ENCODE measurements at regions of chr7 and their contacts with region 1.

Region 1: GRCh38 chr7:23597094-23598091 is at the start of gene CCDC126:
- DNase-seq: peak; percentile 64 to 83 (median 76)
- ATAC-seq: peak; percentile 98
- H3K4me3 ChIP-seq: peak within 1 kb of the TSS; percentile 93
- H3K4me3 Mint-ChIP-seq: peak within 1 kb of the TSS; percentile 86 to 98 (median 94)
- H3K27ac ChIP-seq: peak within 1 kb of the TSS; percentile 74
- H3K27ac Mint-ChIP-seq: peak within 1 kb of the TSS; percentile 59 to 86 (median 80)
- H3K4me1 ChIP-seq: peaks cover 9 to 13% of the 10 kb centered on the region in 2 donors
- H3K4me1 Mint-ChIP-seq: peaks cover 34 to 52% (median 39%) of the 10 kb centered on the region in 7 donors
- H3K27me3 ChIP-seq: no peaks in the 10 kb centered on the region
- H3K27me3 Mint-ChIP-seq: peaks cover 0 to 7% (median 4%) of the 10 kb centered on the region in 5 donors
- total RNA-seq, gene CCDC126: 7.0 to 24.7 (median 17.1) TPM

Region 2: DNA sequence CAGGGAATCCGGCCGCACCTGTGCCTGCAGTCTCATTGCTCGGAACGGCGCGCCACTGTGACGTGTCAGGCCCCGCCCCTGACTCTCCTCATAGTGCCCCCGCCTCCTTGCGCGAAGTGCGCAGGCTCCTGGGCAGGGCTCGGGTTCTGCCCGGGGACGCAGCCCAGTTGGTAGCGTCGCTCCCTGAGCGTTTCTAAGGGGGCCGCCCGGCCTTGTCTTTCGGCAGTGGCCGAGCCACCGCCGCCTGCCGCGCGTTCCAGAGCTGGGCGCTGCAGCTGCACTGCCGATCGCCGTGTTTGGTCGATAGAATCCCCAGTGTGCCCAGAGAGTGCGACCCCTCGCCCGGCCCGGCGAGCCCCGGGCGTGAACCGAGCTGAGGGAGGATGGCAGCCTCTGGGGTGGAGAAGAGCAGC is 491.7 kb before region 1 on chr7 and contains the start of gene KLHL7:
- CTCF ChIA-PET with region 1: no interaction called
- POLR2A ChIA-PET with region 1: no interaction called
- intact Hi-C with region 1: loop called (anchors 2 to 5 kb)
- DNase-seq: peak; percentile 90 to 95 (median 93)
- ATAC-seq: peak; percentile 99
- H3K4me3 ChIP-seq: peak within 1 kb of the TSS; percentile 93
- H3K4me3 Mint-ChIP-seq: peak within 1 kb of the TSS; percentile 90 to 99 (median 96)
- H3K27ac ChIP-seq: peak within 1 kb of the TSS; percentile 90
- H3K27ac Mint-ChIP-seq: peak within 1 kb of the TSS; percentile 91 to 97 (median 96)
- H3K4me1 ChIP-seq: peaks cover 4 to 18% of the 10 kb centered on the region in 2 donors
- H3K4me1 Mint-ChIP-seq: peaks cover 33 to 51% (median 47%) of the 10 kb centered on the region in 7 donors
- H3K27me3 ChIP-seq: no peaks in the 10 kb centered on the region
- H3K27me3 Mint-ChIP-seq: no peaks in the 10 kb centered on the region
- total RNA-seq, gene KLHL7: 16.9 to 22.9 (median 22.7) TPM

Region 3: GRCh38 chr7:23474094-23474828 is 123.1 kb before region 1 on chr7:
- CTCF ChIA-PET with region 1: no interaction called
- POLR2A ChIA-PET with region 1: no interaction called
- intact Hi-C with region 1: loop called in 1 of 2 experiments (anchors 5 kb)
- DNase-seq: peak in 6 of 9 donors; percentile 13 to 90 (median 26)
- ATAC-seq: peak; percentile 80
- H3K4me3 ChIP-seq: no peak overlapping the region
- H3K4me3 Mint-ChIP-seq: peak overlapping the region; percentile 13 to 85 (median 54)
- H3K27ac ChIP-seq: no peak overlapping the region
- H3K27ac Mint-ChIP-seq: peak overlapping the region in 5 of 9 donors; percentile 21 to 70 (median 69)
- H3K4me1 ChIP-seq: peaks cover 12 to 22% of the 10 kb centered on the region in 2 donors
- H3K4me1 Mint-ChIP-seq: peaks cover 17 to 35% (median 29%) of the 10 kb centered on the region in 7 donors
- H3K27me3 ChIP-seq: peaks cover 78 to 85% of the 10 kb centered on the region in 2 donors
- H3K27me3 Mint-ChIP-seq: peaks cover 67 to 75% (median 70%) of the 10 kb centered on the region in 5 donors

Region 4: GRCh38 chr7:23586159-23586558 is 11.2 kb before region 1 on chr7:
- CTCF ChIA-PET with region 1: no interaction called
- POLR2A ChIA-PET with region 1: interaction called, 4 read pairs
- intact Hi-C with region 1: loop called in 1 of 2 experiments (anchors 1 kb)
- DNase-seq: no peak
- ATAC-seq: no peak
- H3K4me3 ChIP-seq: no peak overlapping the region
- H3K4me3 Mint-ChIP-seq: no peak overlapping the region
- H3K27ac ChIP-seq: no peak overlapping the region
- H3K27ac Mint-ChIP-seq: no peak overlapping the region
- H3K4me1 ChIP-seq: no peaks in the 10 kb centered on the region
- H3K4me1 Mint-ChIP-seq: no peaks in the 10 kb centered on the region
- H3K27me3 ChIP-seq: no peaks in the 10 kb centered on the region
- H3K27me3 Mint-ChIP-seq: no peaks in the 10 kb centered on the region

Region 5: DNA sequence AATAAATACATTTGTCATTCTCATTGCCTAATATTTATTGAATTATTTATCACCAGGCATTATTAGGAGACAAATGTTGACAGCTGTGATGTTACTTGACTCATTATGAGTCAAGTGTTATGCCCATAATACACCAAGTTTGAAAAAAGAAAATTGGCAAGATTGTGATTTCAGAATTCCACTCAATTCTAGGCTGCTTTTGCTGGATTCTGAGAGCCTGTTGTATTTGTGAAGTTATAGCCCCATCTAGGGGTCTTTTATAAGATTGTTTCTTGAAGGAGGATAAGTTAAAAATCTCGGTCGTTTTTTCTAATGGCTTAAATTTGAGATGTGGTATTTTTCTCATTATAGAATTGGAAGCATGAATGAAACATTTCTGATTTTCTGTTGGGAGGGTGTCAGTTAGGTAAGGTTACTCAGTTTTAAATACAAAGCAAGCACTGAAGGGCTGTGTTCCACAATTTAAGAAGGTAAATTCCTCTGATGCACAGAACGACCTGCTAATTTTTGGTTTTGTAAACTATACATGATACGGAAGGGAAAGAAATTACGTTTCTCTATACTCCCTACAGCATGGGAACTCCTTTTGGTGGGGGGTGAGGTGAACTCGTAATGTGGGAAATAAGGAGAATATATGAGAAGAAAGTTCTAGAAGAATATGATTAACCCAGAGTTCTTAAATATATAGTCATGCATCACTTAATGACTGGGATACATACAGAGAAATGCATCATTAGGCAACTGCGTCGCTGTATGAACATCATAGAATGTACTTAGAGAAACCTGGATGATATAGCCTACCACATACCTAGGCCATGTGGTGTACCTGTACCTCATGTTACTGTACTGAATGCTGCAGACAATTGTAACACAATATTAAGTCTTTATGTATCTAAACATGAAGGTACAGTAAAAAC is 115.2 kb after region 1 on chr7:
- CTCF ChIA-PET with region 1: interaction called, 3 read pairs
- POLR2A ChIA-PET with region 1: no interaction called
- intact Hi-C with region 1: loop called in 1 of 2 experiments (anchors 1 kb)
- DNase-seq: peak in 7 of 9 donors; percentile 11 to 48 (median 37)
- ATAC-seq: peak; percentile 45
- H3K4me3 ChIP-seq: no peak overlapping the region
- H3K4me3 Mint-ChIP-seq: no peak overlapping the region
- H3K27ac ChIP-seq: no peak overlapping the region
- H3K27ac Mint-ChIP-seq: no peak overlapping the region
- H3K4me1 ChIP-seq: no peaks in the 10 kb centered on the region
- H3K4me1 Mint-ChIP-seq: peaks cover 0 to 2% (median 0%) of the 10 kb centered on the region in 7 donors
- H3K27me3 ChIP-seq: no peaks in the 10 kb centered on the region
- H3K27me3 Mint-ChIP-seq: peaks cover 0 to 4% (median 0%) of the 10 kb centered on the region in 5 donors

Region 6: DNA sequence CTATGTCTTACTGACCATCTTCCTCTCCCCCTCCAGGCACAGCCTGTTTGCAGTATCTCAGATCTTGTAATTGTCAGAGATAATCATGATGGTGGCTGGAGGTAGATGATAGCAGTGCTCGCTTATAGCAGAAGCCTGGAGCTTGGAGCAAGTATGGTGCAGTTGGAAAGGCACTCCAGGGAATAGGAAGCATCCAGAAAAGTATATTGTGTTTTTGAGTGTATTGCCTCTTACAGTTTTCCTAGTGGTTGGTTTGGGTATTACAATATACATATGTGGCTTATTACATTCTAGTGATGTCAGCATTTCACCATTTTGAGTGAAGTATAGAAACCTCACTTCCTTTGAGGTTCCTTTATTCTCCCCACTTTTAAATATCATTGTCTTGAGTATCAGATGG is 214.1 kb after region 1 on chr7:
- CTCF ChIA-PET with region 1: no interaction called
- POLR2A ChIA-PET with region 1: no interaction called
- intact Hi-C with region 1: no loop called
- DNase-seq: peak in 1 of 9 donors; percentile 4
- ATAC-seq: no peak
- H3K4me3 ChIP-seq: no peak overlapping the region
- H3K4me3 Mint-ChIP-seq: no peak overlapping the region
- H3K27ac ChIP-seq: no peak overlapping the region
- H3K27ac Mint-ChIP-seq: no peak overlapping the region
- H3K4me1 ChIP-seq: no peaks in the 10 kb centered on the region
- H3K4me1 Mint-ChIP-seq: peaks cover 0 to 4% (median 0%) of the 10 kb centered on the region in 7 donors
- H3K27me3 ChIP-seq: no peaks in the 10 kb centered on the region
- H3K27me3 Mint-ChIP-seq: peaks cover 0 to 25% (median 4%) of the 10 kb centered on the region in 5 donors

Region 7: DNA sequence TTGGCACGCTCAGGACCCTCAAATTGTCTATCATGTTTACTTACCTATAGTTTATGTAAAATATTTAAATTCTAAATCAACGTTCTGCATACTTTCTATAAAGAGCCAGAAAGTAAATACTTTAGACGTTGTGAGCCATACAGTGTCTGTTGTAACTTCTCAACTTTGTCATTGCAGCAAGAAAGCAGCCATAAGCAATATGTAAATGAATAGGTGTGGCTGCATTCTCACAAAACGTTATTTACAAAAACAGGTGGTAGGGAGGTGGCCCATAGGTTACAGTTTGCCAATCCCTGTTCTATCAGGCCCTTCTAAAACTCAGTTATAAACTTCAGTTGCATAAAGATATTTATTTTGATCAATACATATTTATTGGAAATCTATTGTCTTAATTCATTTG is 674.5 kb after region 1 on chr7:
- CTCF ChIA-PET with region 1: no interaction called
- POLR2A ChIA-PET with region 1: no interaction called
- intact Hi-C with region 1: no loop called
- DNase-seq: no peak
- ATAC-seq: no peak
- H3K4me3 ChIP-seq: no peak overlapping the region
- H3K4me3 Mint-ChIP-seq: no peak overlapping the region
- H3K27ac ChIP-seq: no peak overlapping the region
- H3K27ac Mint-ChIP-seq: no peak overlapping the region
- H3K4me1 ChIP-seq: no peaks in the 10 kb centered on the region
- H3K4me1 Mint-ChIP-seq: no peaks in the 10 kb centered on the region
- H3K27me3 ChIP-seq: peaks cover 0 to 3% of the 10 kb centered on the region in 2 donors
- H3K27me3 Mint-ChIP-seq: peaks cover 0 to 18% (median 11%) of the 10 kb centered on the region in 5 donors

Region 8: DNA sequence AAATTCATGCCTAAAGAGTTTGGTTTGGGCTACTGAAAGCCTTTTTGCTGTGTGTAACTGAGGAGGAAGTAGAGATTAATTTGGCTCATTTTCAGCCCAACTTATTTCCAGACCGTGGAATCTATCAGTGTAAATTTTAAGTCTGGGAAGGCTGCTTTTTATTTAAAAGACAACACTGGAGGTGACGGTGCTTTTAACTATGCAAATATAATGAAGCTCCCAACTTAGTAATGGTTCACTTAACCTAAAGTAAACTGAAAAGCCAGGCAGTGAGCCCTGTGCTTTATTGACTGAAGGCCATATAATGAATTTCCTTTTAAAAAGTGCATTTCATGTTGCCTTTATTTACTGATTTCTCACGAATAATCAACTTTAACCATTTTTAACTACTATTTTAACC is 813.8 kb after region 1 on chr7:
- CTCF ChIA-PET with region 1: no interaction called
- POLR2A ChIA-PET with region 1: no interaction called
- intact Hi-C with region 1: no loop called
- DNase-seq: no peak
- ATAC-seq: no peak
- H3K4me3 ChIP-seq: no peak overlapping the region
- H3K4me3 Mint-ChIP-seq: no peak overlapping the region
- H3K27ac ChIP-seq: no peak overlapping the region
- H3K27ac Mint-ChIP-seq: no peak overlapping the region
- H3K4me1 ChIP-seq: no peaks in the 10 kb centered on the region
- H3K4me1 Mint-ChIP-seq: peaks cover 0 to 3% (median 2%) of the 10 kb centered on the region in 7 donors
- H3K27me3 ChIP-seq: no peaks in the 10 kb centered on the region
- H3K27me3 Mint-ChIP-seq: peaks cover 5 to 22% (median 8%) of the 10 kb centered on the region in 5 donors

Region 9: GRCh38 chr7:25125137-25125946 is 1527.9 kb after region 1 on chr7 and contains the start of gene CYCS:
- CTCF ChIA-PET with region 1: no interaction called
- POLR2A ChIA-PET with region 1: no interaction called
- intact Hi-C with region 1: loop called (anchors 2 to 10 kb)
- DNase-seq: peak; percentile 97 to 100 (median 99)
- ATAC-seq: peak; percentile 96
- H3K4me3 ChIP-seq: peak within 1 kb of the TSS; percentile 74
- H3K4me3 Mint-ChIP-seq: peak within 1 kb of the TSS; percentile 88 to 100 (median 100)
- H3K27ac ChIP-seq: peak within 1 kb of the TSS; percentile 93
- H3K27ac Mint-ChIP-seq: peak within 1 kb of the TSS; percentile 98 to 100 (median 100)
- H3K4me1 ChIP-seq: peaks cover 7 to 13% of the 10 kb centered on the region in 2 donors
- H3K4me1 Mint-ChIP-seq: peaks cover 15 to 40% (median 23%) of the 10 kb centered on the region in 7 donors
- H3K27me3 ChIP-seq: no peaks in the 10 kb centered on the region
- H3K27me3 Mint-ChIP-seq: peaks cover 0 to 5% (median 0%) of the 10 kb centered on the region in 5 donors
- total RNA-seq, gene CYCS: 40.4 to 130 (median 114) TPM

Region 10: DNA sequence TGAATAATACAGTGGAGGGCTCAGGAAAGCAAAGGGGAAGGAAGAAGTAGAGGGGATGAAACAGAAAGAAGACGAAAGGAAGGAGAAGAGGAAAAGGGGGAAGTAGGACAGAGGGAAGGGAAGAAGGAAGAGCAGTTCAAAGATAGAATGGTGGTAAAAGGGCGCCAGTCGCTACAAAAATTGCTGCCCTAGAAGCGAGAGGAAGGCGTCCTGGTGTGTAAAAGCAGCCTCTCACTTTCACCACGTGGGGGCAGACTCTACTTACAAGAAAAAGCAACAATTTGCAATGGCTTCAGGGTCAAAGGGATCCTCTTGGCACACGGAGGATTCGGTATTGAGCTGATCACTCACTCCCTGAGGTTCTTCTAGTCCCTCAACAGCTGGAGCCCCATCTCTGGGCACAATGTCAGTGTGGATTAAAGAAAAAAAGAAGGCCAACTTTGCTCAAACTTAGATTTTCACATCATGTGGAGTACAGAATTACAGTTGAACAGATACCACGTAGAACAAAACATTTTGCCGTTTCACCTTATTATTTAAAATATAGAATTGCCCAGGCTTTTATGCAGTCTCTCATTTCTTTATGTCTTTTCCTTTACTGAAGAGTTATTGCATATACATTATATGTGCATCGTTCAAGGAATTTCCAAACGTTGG is 1662.3 kb after region 1 on chr7:
- CTCF ChIA-PET with region 1: no interaction called
- POLR2A ChIA-PET with region 1: no interaction called
- intact Hi-C with region 1: loop called in 1 of 2 experiments (anchors 1 kb)
- DNase-seq: peak; percentile 23 to 82 (median 74)
- ATAC-seq: peak; percentile 86
- H3K4me3 ChIP-seq: no peak overlapping the region
- H3K4me3 Mint-ChIP-seq: peak overlapping the region in 8 of 10 donors; percentile 51 to 75 (median 68)
- H3K27ac ChIP-seq: no peak overlapping the region
- H3K27ac Mint-ChIP-seq: peak overlapping the region in 7 of 9 donors; percentile 56 to 91 (median 81)
- H3K4me1 ChIP-seq: peaks cover 0 to 23% of the 10 kb centered on the region in 2 donors
- H3K4me1 Mint-ChIP-seq: peaks cover 15 to 37% (median 33%) of the 10 kb centered on the region in 7 donors
- H3K27me3 ChIP-seq: no peaks in the 10 kb centered on the region
- H3K27me3 Mint-ChIP-seq: peaks cover 0 to 14% (median 7%) of the 10 kb centered on the region in 5 donors